ENCODE measurements at regions of chr1 and their contacts with region 1.

Region 1: GRCh38 chr1:1374929-1375662 is at the start of gene AURKAIP1:
- DNase-seq: peak; percentile 97
- H3K4me3 Mint-ChIP-seq: peak within 1 kb of the TSS; percentile 93
- H3K27ac Mint-ChIP-seq: peak within 1 kb of the TSS; percentile 98
- H3K4me1 Mint-ChIP-seq: peaks cover 11% of the 10 kb centered on the region
- H3K27me3 Mint-ChIP-seq: peaks cover 2% of the 10 kb centered on the region
- total RNA-seq, gene AURKAIP1: 147 and 148 TPM in 2 replicates

Region 2: DNA sequence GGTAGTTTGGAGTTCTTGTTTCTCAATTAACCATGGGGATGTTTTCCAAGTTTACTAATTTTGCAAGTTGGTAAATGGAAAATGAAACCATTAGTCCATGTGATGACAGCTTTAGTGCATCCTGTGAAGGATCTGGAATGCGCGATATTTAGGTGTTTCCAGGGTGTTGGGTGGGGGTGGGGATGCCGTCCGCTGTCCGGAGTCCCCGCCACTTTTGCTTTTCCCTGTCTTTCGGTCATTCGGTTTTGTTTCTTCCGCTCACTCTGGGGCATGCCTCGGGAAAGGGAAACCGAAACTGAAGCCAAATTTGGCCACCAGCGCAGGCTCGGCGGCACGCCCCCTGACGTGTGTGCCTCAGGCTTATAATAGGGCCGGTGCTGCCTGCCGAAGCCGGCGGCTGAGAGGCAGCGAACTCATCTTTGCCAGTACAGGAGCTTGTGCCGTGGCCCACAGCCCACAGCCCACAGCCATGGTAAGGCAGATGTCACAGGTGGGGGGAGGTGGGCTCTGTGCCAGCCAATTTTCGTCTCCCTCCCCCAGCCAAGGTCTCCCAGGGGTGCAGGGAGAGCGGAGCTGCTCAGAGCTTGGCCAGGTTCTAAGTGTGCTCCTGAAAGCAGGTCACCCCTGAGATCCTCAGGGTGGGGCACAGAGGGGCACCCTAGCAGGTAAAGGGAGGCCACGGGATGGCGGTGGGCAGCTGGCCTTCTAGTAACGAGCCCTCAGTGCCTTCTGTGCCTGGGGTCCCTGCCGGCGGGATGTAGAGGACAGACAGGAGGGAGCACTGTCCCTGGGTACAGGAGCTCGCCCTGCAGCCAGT is 361.8 kb before region 1 on chr1 and contains the start of gene ISG15:
- intact Hi-C with region 1: loop called (anchors 1 kb)
- DNase-seq: peak; percentile 89
- H3K4me3 Mint-ChIP-seq: peak within 1 kb of the TSS; percentile 89
- H3K27ac Mint-ChIP-seq: peak within 1 kb of the TSS; percentile 96
- H3K4me1 Mint-ChIP-seq: peaks cover 37% of the 10 kb centered on the region
- H3K27me3 Mint-ChIP-seq: peaks cover 5% of the 10 kb centered on the region
- total RNA-seq, gene ISG15: 52.9 and 53.7 TPM in 2 replicates

Region 3: GRCh38 chr1:1349256-1350012 is 25.7 kb before region 1 on chr1 and contains the start of gene DVL1:
- intact Hi-C with region 1: loop called (anchors 2 kb)
- DNase-seq: peak; percentile 56
- H3K4me3 Mint-ChIP-seq: peak within 1 kb of the TSS; percentile 82
- H3K27ac Mint-ChIP-seq: peak within 1 kb of the TSS; percentile 63
- H3K4me1 Mint-ChIP-seq: peaks cover 19% of the 10 kb centered on the region
- H3K27me3 Mint-ChIP-seq: peaks cover 22% of the 10 kb centered on the region
- total RNA-seq, gene DVL1: 66.5 and 72.2 TPM in 2 replicates

Region 4: GRCh38 chr1:1406817-1407635 is 31.9 kb after region 1 on chr1 and contains the start of gene MRPL20:
- intact Hi-C with region 1: loop called (anchors 1 kb)
- DNase-seq: peak; percentile 96
- H3K4me3 Mint-ChIP-seq: peak within 1 kb of the TSS; percentile 95
- H3K27ac Mint-ChIP-seq: peak within 1 kb of the TSS; percentile 94
- H3K4me1 Mint-ChIP-seq: peaks cover 15% of the 10 kb centered on the region
- H3K27me3 Mint-ChIP-seq: peaks cover 2% of the 10 kb centered on the region
- total RNA-seq, gene MRPL20: 184 and 205 TPM in 2 replicates

Region 5: GRCh38 chr1:1511533-1512285 is 136.6 kb after region 1 on chr1 and contains the start of gene ATAD3A:
- intact Hi-C with region 1: loop called (anchors 1 kb)
- DNase-seq: peak; percentile 95
- H3K4me3 Mint-ChIP-seq: peak within 1 kb of the TSS; percentile 97
- H3K27ac Mint-ChIP-seq: peak within 1 kb of the TSS; percentile 92
- H3K4me1 Mint-ChIP-seq: peaks cover 7% of the 10 kb centered on the region
- H3K27me3 Mint-ChIP-seq: no peaks in the 10 kb centered on the region
- total RNA-seq, gene ATAD3A: 108 TPM in 2 replicates

Measured in activated T-helper 1 cell treated with anti-CD3 and anti-CD28 coated beads, Interleukin-12 subunit alpha, Interleukin-12 subunit beta, Interleukin-2, Interleukin-4 antibody, amounts not matched to agents 30 ng/mL and 10 ng/mL and 1 ng/mL, durations not matched to agents 14 hours and 24 hours and 36 hours (primary cell).